Activated CD4-positive, alpha-beta T cell treated with anti-CD3 and anti-CD28 coated beads for 36 hours (primary cell): ENCODE measurements at regions of chr6 and their contacts with region 1.

Region 1: GRCh38 chr6:41683510-41684310 is 45.4 kb downstream of the MDFI start:
- DNase-seq: peak; percentile 90
- ATAC-seq: peak; percentile 92
- H3K4me3 Mint-ChIP-seq: peak overlapping the region; percentile 69
- H3K27ac Mint-ChIP-seq: peak overlapping the region; percentile 77
- H3K4me1 Mint-ChIP-seq: peaks cover 8% of the 10 kb centered on the region
- H3K27me3 Mint-ChIP-seq: no peaks in the 10 kb centered on the region

Region 2: DNA sequence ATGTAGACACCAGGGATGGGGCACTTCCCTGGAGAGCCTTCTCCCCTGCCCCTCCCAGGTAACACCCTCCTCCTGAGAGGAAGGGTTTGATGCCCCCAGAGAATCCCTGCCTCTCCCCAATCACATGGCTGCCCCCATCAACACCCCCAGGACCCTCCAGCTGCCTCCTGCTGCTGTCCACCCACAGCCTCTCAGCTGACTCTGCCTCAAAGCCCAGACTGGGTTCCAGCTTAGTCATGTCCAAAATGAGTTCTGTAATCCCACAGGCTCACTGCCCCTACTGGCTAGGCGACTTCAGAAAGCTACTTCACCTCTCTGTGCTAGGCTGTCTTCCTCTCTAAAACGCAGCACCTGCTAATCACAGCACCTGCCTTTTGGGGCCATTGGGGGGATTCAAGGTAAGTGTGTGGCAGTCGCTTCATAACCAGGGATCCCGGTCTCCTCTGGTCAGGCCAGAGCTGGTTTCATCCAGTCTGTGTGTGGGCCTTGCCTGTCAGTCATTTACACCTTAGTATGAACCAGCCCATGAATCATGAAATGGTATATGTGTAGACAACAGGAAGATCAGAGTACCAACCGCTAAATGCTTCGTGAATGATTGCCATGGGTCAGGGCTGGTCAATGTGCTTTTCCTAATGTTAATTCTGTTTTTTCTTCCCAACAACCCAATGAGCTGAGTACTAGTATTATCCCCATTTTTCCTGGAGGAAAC is 11.3 kb after region 1 on chr6:
- CTCF ChIA-PET with region 1: interaction called, 10 read pairs
- POLR2A ChIA-PET with region 1: no interaction called
- intact Hi-C with region 1: no loop called
- DNase-seq: no peak
- ATAC-seq: no peak
- H3K4me3 Mint-ChIP-seq: no peak overlapping the region
- H3K27ac Mint-ChIP-seq: no peak overlapping the region
- H3K4me1 Mint-ChIP-seq: no peaks in the 10 kb centered on the region
- H3K27me3 Mint-ChIP-seq: no peaks in the 10 kb centered on the region

Region 3: DNA sequence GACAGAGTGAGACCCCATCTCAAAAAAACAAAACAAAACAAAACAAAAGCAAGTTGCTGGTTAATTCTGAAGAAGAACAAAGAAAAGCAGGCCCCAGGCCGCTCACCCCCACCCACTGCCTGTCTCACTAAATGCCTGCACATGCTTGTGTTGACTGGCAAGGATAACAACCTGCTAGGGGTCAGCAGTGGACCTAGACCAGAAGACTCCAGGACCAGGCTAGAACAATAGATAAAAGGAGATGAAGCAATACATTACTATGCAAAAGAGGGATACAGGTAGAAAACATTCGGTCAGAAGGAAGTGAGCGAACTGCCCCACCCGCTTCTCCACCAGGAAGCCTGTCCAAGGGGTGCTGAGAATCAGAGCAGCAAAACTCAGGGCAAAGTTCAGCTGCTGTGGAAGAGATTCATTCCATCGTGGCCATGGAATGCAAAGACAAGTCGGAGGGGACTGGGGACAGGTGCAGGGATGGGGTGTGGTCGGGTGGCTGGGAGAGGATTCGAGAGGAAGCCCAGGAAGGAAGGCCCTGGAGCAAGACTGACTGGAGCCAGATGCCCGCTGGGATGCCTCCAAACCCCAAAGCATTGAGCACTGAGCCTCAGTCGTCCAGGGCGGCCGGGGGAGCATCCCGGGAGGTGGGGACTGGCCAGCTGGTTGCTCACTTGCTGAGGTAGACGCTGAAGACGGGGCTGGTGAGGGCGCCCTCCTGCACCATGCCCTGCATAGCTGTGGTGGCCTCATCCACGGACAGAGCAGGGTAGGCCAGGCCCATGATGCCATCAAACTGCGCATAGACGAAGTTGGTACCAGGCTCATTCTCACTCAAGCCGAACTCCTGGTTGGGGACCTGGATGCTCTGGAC is 58.1 kb after region 1 on chr6:
- CTCF ChIA-PET with region 1: no interaction called
- POLR2A ChIA-PET with region 1: no interaction called
- intact Hi-C with region 1: no loop called
- DNase-seq: no peak
- ATAC-seq: no peak
- H3K4me3 Mint-ChIP-seq: no peak overlapping the region
- H3K27ac Mint-ChIP-seq: no peak overlapping the region
- H3K4me1 Mint-ChIP-seq: no peaks in the 10 kb centered on the region
- H3K27me3 Mint-ChIP-seq: no peaks in the 10 kb centered on the region

Region 4: GRCh38 chr6:41787219-41787917 is 103.7 kb after region 1 on chr6 and contains the start of gene TOMM6:
- CTCF ChIA-PET with region 1: no interaction called
- POLR2A ChIA-PET with region 1: no interaction called
- intact Hi-C with region 1: no loop called
- DNase-seq: peak; percentile 98
- ATAC-seq: peak; percentile 86
- H3K4me3 Mint-ChIP-seq: peak within 1 kb of the TSS; percentile 96
- H3K27ac Mint-ChIP-seq: peak within 1 kb of the TSS; percentile 98
- H3K4me1 Mint-ChIP-seq: peaks cover 19% of the 10 kb centered on the region
- H3K27me3 Mint-ChIP-seq: peaks cover 2% of the 10 kb centered on the region
- total RNA-seq, gene TOMM6: 282 to 345 TPM